IMR-90 (cell line): ENCODE measurements at regions of chr7 and their contacts with region 1.

Region 1: GRCh38 chr7:44811086-44811485 is 14.6 kb downstream of the PPIA start:
- DNase-seq: no peak
- ATAC-seq: no peak
- H3K4me3 ChIP-seq: no peak overlapping the region
- H3K27ac ChIP-seq: no peak overlapping the region
- H3K4me1 ChIP-seq: no peaks in the 10 kb centered on the region
- H3K27me3 ChIP-seq: no peaks in the 10 kb centered on the region
- CTCF ChIP-seq: no peak
- POLR2A ChIP-seq: no peak
- RAD21 ChIP-seq: no peak

Region 2: GRCh38 chr7:44827567-44827966 is 16.5 kb after region 1 on chr7:
- CTCF ChIA-PET with region 1: no interaction called
- POLR2A ChIA-PET with region 1: no interaction called
- dilution Hi-C with region 1: no loop called
- in situ Hi-C with region 1: no loop called
- intact Hi-C with region 1: loop called (anchors 2 kb)
- DNase-seq: no peak
- ATAC-seq: no peak
- H3K4me3 ChIP-seq: no peak overlapping the region
- H3K27ac ChIP-seq: no peak overlapping the region
- H3K4me1 ChIP-seq: no peaks in the 10 kb centered on the region
- H3K27me3 ChIP-seq: no peaks in the 10 kb centered on the region
- CTCF ChIP-seq: no peak
- POLR2A ChIP-seq: no peak
- RAD21 ChIP-seq: no peak

Region 3: GRCh38 chr7:44962483-44963251 is 151.6 kb after region 1 on chr7:
- CTCF ChIA-PET with region 1: no interaction called
- POLR2A ChIA-PET with region 1: no interaction called
- dilution Hi-C with region 1: no loop called
- in situ Hi-C with region 1: no loop called
- intact Hi-C with region 1: no loop called
- DNase-seq: no peak
- ATAC-seq: peak; percentile 85
- H3K4me3 ChIP-seq: peak overlapping the region; percentile 34
- H3K27ac ChIP-seq: no peak overlapping the region
- H3K4me1 ChIP-seq: peaks cover 5% of the 10 kb centered on the region; the same call in 1 of the 2 replicates
- H3K27me3 ChIP-seq: peaks cover 28% of the 10 kb centered on the region
- CTCF ChIP-seq: no peak
- POLR2A ChIP-seq: no peak
- RAD21 ChIP-seq: no peak; the same call in 1 of the 2 replicates